Gastrocnemius medialis (tissue), 4 donors: ENCODE measurements at regions of chr3 and their contacts with region 1.

Region 1: GRCh38 chr3:130354430-130354829 is 9.0 kb downstream of the COL6A5 start:
- DNase-seq: no peak
- ATAC-seq: no peak
- H3K4me3 ChIP-seq: no peak overlapping the region
- H3K27ac ChIP-seq: no peak overlapping the region
- H3K4me1 ChIP-seq: no peaks in the 10 kb centered on the region
- H3K27me3 ChIP-seq: no peaks in the 10 kb centered on the region
- CTCF ChIP-seq: no peak
- POLR2A ChIP-seq: no peak

Region 2: GRCh38 chr3:130276203-130276803 is 78.1 kb before region 1 on chr3:
- in situ Hi-C with region 1: no loop called
- intact Hi-C with region 1: no loop called
- DNase-seq: no peak
- ATAC-seq: no peak
- H3K4me3 ChIP-seq: no peak overlapping the region
- H3K27ac ChIP-seq: no peak overlapping the region
- H3K4me1 ChIP-seq: no peaks in the 10 kb centered on the region
- H3K27me3 ChIP-seq: no peaks in the 10 kb centered on the region
- CTCF ChIP-seq: peak in 3 of 5 experiments; percentile 23 to 50 (median 23)
- POLR2A ChIP-seq: no peak

Region 3: GRCh38 chr3:130414457-130414856 is 60.0 kb after region 1 on chr3:
- in situ Hi-C with region 1: no loop called
- intact Hi-C with region 1: no loop called
- DNase-seq: no peak
- ATAC-seq: no peak
- H3K4me3 ChIP-seq: no peak overlapping the region
- H3K27ac ChIP-seq: no peak overlapping the region
- H3K4me1 ChIP-seq: no peaks in the 10 kb centered on the region
- H3K27me3 ChIP-seq: no peaks in the 10 kb centered on the region
- CTCF ChIP-seq: no peak
- POLR2A ChIP-seq: no peak

Region 4: DNA sequence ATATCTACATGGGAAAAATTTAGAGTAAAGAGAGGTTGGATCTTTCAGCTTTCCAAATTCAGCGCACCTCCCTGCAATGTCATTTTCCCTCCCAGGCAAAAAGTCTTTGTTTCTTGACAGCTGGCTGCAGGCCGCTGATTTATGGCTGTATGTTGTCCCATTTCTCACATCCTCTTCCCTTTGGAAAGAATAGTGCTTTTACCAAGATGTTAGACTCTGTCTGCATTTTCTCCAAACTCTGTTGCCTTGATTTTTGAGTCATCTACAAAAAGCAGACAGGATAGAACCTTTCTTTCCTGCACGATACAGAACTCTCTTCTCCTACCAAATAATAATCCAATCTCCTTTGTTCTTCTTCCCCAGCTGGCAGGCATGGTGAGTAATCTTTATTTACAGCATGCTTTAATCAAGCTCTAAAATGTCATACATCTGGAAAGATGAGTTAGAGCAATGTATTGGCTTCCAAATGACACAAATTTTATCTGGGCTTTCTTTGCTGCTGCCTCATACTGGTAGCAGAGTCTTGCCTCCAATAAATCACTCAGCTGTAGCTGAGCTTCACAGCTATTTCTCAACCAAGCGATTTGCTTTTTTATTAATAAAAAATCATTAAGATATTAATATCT is 290.3 kb after region 1 on chr3:
- in situ Hi-C with region 1: no loop called
- intact Hi-C with region 1: loop called (anchors 5 kb)
- DNase-seq: no peak
- ATAC-seq: no peak
- H3K4me3 ChIP-seq: no peak overlapping the region
- H3K27ac ChIP-seq: no peak overlapping the region
- H3K4me1 ChIP-seq: no peaks in the 10 kb centered on the region
- H3K27me3 ChIP-seq: no peaks in the 10 kb centered on the region
- CTCF ChIP-seq: no peak
- POLR2A ChIP-seq: no peak